Activated CD4-positive, alpha-beta T cell treated with anti-CD3 and anti-CD28 coated beads for 36 hours (primary cell): ENCODE measurements at regions of chr2 and their contacts with region 1.

Region 1: GRCh38 chr2:240566203-240567136 is 1.8 kb upstream of the RNPEPL1 start:
- DNase-seq: peak; percentile 98
- ATAC-seq: peak; percentile 67
- H3K4me3 Mint-ChIP-seq: peak overlapping the region; percentile 87
- H3K27ac Mint-ChIP-seq: peak overlapping the region; percentile 98
- H3K4me1 Mint-ChIP-seq: peaks cover 65% of the 10 kb centered on the region
- H3K27me3 Mint-ChIP-seq: no peaks in the 10 kb centered on the region

Region 2: GRCh38 chr2:240513549-240514287 is 52.8 kb before region 1 on chr2:
- CTCF ChIA-PET with region 1: interaction called, 21 read pairs
- POLR2A ChIA-PET with region 1: no interaction called
- intact Hi-C with region 1: loop called (anchors 1 to 5 kb)
- DNase-seq: peak; percentile 93
- ATAC-seq: peak; percentile 99
- H3K4me3 Mint-ChIP-seq: no peak overlapping the region
- H3K27ac Mint-ChIP-seq: peak overlapping the region; percentile 71
- H3K4me1 Mint-ChIP-seq: peaks cover 13% of the 10 kb centered on the region
- H3K27me3 Mint-ChIP-seq: no peaks in the 10 kb centered on the region

Region 3: DNA sequence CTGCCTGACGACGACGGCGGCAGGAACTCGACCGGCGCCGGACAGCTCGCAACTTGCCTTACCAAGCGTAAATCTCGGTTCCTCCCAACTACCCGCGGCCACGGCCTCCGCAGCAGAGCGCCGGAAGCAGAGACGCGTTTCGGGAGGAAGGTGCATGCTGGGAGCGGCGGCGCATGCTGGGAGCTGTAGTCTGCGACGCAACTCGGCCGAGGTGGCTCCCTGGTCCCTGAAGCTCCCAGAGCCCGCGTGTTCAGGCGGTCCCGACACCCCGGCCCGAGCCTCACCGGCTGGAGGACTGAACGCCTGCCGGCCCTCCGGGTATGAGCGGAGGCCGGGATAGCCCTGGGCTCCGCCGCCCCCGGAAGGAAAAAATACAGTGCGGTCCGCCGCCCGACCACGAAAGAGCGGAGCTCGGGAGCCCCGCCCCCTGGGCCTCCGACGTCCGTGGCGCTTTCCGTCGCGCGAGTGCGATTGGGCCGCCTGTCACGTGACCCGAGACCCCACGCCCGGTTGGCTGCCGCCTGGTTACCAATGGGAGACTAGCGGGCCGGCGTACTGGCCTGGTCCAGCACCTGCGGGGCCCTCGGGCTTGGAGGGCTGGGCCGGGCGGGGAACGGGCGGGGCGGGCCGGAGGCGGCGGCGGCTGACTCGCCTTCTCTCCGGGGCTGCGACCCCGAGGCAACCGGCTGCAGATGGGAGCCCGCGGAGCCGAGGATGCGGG is 19.9 kb after region 1 on chr2 and contains the start of gene CAPN10:
- CTCF ChIA-PET with region 1: interaction called, 61 read pairs
- POLR2A ChIA-PET with region 1: interaction called, 34 read pairs
- intact Hi-C with region 1: loop called (anchors 1 kb)
- DNase-seq: peak; percentile 98
- ATAC-seq: peak; percentile 91
- H3K4me3 Mint-ChIP-seq: peak within 1 kb of the TSS; percentile 87
- H3K27ac Mint-ChIP-seq: peak within 1 kb of the TSS; percentile 85
- H3K4me1 Mint-ChIP-seq: peaks cover 38% of the 10 kb centered on the region
- H3K27me3 Mint-ChIP-seq: no peaks in the 10 kb centered on the region
- total RNA-seq, gene CAPN10: 22.1 to 30.2 TPM

Region 4: GRCh38 chr2:240832205-240832727 is 265.8 kb after region 1 on chr2:
- CTCF ChIA-PET with region 1: no interaction called
- POLR2A ChIA-PET with region 1: no interaction called
- intact Hi-C with region 1: loop called (anchors 1 kb)
- DNase-seq: peak; percentile 98
- ATAC-seq: peak; percentile 96
- H3K4me3 Mint-ChIP-seq: peak overlapping the region; percentile 63
- H3K27ac Mint-ChIP-seq: no peak overlapping the region
- H3K4me1 Mint-ChIP-seq: peaks cover 2% of the 10 kb centered on the region
- H3K27me3 Mint-ChIP-seq: peaks cover 19% of the 10 kb centered on the region

Region 5: GRCh38 chr2:241686649-241687425 is 1120.4 kb after region 1 on chr2 and contains the start of gene DTYMK:
- CTCF ChIA-PET with region 1: no interaction called
- POLR2A ChIA-PET with region 1: no interaction called
- intact Hi-C with region 1: loop called in 1 of 2 experiments (anchors 5 kb)
- DNase-seq: peak; percentile 98
- ATAC-seq: peak; percentile 96
- H3K4me3 Mint-ChIP-seq: peak within 1 kb of the TSS; percentile 98
- H3K27ac Mint-ChIP-seq: peak within 1 kb of the TSS; percentile 96
- H3K4me1 Mint-ChIP-seq: peaks cover 32% of the 10 kb centered on the region
- H3K27me3 Mint-ChIP-seq: no peaks in the 10 kb centered on the region
- total RNA-seq, gene DTYMK: 79.8 to 93.1 TPM